ENCODE measurements at regions of chr19 and their contacts with region 1.

Region 1: GRCh38 chr19:56076498-56076897 is 44.6 kb downstream of the ZNF787 start:
- DNase-seq: no peak
- ATAC-seq: peak; percentile 79
- H3K4me3 ChIP-seq: no peak overlapping the region
- H3K27ac ChIP-seq: no peak overlapping the region
- H3K4me1 ChIP-seq: peaks cover 6% of the 10 kb centered on the region
- H3K27me3 ChIP-seq: no peaks in the 10 kb centered on the region
- CTCF ChIP-seq: peak; percentile 85

Region 2: GRCh38 chr19:56170261-56170660 is 93.8 kb after region 1 on chr19:
- intact Hi-C with region 1: loop called (anchors 5 kb)
- DNase-seq: peak; percentile 89
- ATAC-seq: peak; percentile 86
- H3K4me3 ChIP-seq: no peak overlapping the region
- H3K27ac ChIP-seq: no peak overlapping the region
- H3K4me1 ChIP-seq: peaks cover 6% of the 10 kb centered on the region
- H3K27me3 ChIP-seq: peaks cover 9% of the 10 kb centered on the region
- CTCF ChIP-seq: no peak

Region 3: DNA sequence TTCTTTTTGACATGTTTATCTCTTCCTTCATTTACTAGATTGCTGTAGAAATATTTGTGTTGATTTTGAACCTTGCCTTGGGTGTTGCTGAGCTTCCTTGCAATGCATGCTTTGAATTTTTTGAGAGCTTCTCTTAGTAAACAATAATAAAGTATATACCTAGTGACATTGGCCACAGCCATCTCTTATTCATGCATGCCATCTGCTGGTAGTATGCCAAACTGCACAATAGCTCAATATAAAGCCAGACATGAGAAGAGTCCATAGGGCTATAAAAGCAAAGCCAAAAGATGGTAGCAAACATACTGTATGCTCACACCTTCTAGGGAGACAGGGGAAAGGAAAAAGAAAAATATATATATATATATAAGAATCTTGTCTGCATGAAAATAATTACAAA is 257.0 kb after region 1 on chr19:
- intact Hi-C with region 1: loop called (anchors 5 kb)
- DNase-seq: no peak
- ATAC-seq: peak; percentile 90
- H3K4me3 ChIP-seq: no peak overlapping the region
- H3K27ac ChIP-seq: no peak overlapping the region
- H3K4me1 ChIP-seq: no peaks in the 10 kb centered on the region
- H3K27me3 ChIP-seq: no peaks in the 10 kb centered on the region
- CTCF ChIP-seq: peak; percentile 74